PC-9 (cell line): ENCODE measurements at regions of chr12 and their contacts with region 1.

Region 1: GRCh38 chr12:98635657-98636323 is 8.8 kb downstream of the IKBIP start:
- DNase-seq: peak; percentile 9 to 81
- H3K4me3 ChIP-seq: no peak overlapping the region
- H3K27ac ChIP-seq: no peak overlapping the region
- H3K4me1 ChIP-seq: peaks cover 21% of the 10 kb centered on the region
- H3K27me3 ChIP-seq: no peaks in the 10 kb centered on the region
- CTCF ChIP-seq: no peak

Region 2: GRCh38 chr12:98601924-98602323 is 33.9 kb before region 1 on chr12:
- CTCF ChIA-PET with region 1: no interaction called
- POLR2A ChIA-PET with region 1: interaction called, 26 read pairs
- intact Hi-C with region 1: no loop called
- DNase-seq: no peak
- H3K4me3 ChIP-seq: no peak overlapping the region
- H3K27ac ChIP-seq: no peak overlapping the region
- H3K4me1 ChIP-seq: no peaks in the 10 kb centered on the region
- H3K27me3 ChIP-seq: no peaks in the 10 kb centered on the region
- CTCF ChIP-seq: no peak

Region 3: DNA sequence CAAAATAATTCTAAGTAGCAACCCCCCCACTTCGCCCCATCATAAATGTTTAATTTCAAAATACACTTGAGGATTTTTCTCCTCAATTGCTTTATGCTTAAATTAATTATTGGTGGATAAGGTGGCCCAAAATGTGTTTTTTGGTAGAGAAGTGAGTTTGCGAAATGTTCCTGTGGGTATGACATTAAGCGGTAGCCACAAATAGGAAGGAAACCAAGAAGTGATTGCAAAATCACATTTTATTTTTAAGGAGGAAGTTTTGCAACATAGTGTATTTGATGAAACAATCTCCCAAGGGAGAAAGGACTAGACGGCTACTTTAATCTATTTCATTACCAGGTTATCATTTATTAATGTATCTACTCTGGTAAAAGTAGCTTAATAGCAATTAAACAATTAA is 16.8 kb before region 1 on chr12:
- CTCF ChIA-PET with region 1: no interaction called
- POLR2A ChIA-PET with region 1: no interaction called
- intact Hi-C with region 1: no loop called
- DNase-seq: no peak
- H3K4me3 ChIP-seq: no peak overlapping the region
- H3K27ac ChIP-seq: no peak overlapping the region
- H3K4me1 ChIP-seq: no peaks in the 10 kb centered on the region
- H3K27me3 ChIP-seq: no peaks in the 10 kb centered on the region
- CTCF ChIP-seq: no peak

Region 4: DNA sequence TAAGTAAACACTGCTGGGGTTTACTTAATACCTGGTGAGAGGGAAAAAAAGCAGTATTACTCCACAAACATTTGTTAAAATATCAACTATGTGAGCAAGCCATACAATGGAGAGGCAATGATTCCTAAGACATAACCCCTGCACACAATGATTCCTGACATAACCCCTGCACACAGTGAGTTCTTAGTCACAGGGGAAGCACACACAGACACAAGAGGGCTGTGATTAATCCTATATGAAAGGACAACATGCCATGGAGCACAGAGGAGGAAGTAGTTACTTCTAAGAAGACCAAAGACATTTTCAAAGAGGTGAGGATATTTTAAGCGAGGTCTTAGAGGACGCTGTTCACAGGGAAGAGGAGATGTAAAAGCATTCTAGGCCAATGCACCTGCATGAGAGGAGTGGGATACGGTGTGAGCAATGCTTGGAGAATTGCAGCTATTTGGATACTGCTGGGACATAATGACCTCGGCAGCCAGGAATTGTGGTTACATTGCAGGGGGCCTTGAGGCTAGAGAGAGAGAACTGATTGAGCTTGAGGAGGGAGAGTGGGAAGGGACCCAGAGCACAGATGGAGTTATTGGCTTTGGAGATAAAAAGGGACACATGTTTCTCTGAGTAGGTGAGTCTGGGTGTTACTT is 221.2 kb after region 1 on chr12:
- CTCF ChIA-PET with region 1: no interaction called
- POLR2A ChIA-PET with region 1: no interaction called
- intact Hi-C with region 1: no loop called
- DNase-seq: no peak
- H3K4me3 ChIP-seq: no peak overlapping the region
- H3K27ac ChIP-seq: no peak overlapping the region
- H3K4me1 ChIP-seq: no peaks in the 10 kb centered on the region
- H3K27me3 ChIP-seq: peaks cover 65% of the 10 kb centered on the region
- CTCF ChIP-seq: no peak